IMR-90 (cell line): ENCODE measurements at regions of chr16 and their contacts with region 1.

Region 1: DNA sequence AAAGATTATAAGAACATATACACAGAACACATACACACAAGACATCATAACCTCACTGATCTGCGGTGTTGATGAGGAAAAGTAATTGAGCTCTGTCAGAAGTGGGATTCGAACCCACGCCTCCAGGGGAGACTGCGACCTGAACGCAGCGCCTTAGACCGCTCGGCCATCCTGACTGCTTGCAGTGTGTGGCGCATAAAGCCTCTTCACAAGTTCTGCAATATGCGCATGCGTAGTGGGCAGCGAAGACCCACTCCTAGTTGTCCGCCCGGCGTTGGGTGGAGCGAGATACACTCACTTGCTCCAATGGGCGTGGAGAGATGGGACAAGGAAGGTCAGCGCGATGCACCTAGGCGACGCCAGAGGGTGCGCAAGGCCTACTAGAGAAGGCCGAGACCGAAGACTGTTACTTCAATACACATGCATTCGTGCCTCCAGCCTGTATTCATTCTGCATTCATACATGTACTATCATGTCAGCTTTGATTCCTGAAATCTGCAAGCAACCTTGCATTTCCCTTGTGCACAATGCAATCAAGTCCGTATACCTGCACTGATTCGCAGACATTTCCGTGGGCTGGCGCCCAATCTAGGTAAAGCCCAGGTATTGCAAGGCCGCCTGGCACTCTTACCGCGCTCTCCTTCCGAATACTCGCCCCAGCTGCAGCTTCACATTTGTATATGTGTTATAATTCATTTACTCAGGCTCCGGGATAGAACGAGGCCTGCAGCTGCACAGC is 16.1 kb upstream of the PLLP start:
- DNase-seq: peak; percentile 97
- ATAC-seq: peak; percentile 89
- H3K4me3 ChIP-seq: peak overlapping the region; percentile 64; the same call in 1 of the 2 replicates
- H3K27ac ChIP-seq: no peak overlapping the region
- H3K4me1 ChIP-seq: peaks cover 3% of the 10 kb centered on the region; the same call in 1 of the 2 replicates
- H3K27me3 ChIP-seq: peaks cover 12% of the 10 kb centered on the region
- CTCF ChIP-seq: peak; percentile 99
- POLR2A ChIP-seq: peak; percentile 49; the same call in 1 of the 2 replicates
- RAD21 ChIP-seq: peak; percentile 100

Region 2: GRCh38 chr16:57084257-57084770 is 216.2 kb before region 1 on chr16:
- CTCF ChIA-PET with region 1: no interaction called
- POLR2A ChIA-PET with region 1: no interaction called
- dilution Hi-C with region 1: no loop called
- in situ Hi-C with region 1: loop called (anchors 10 kb)
- intact Hi-C with region 1: loop called (anchors 1 kb)
- DNase-seq: peak; percentile 68
- ATAC-seq: peak; percentile 96
- H3K4me3 ChIP-seq: no peak overlapping the region
- H3K27ac ChIP-seq: no peak overlapping the region
- H3K4me1 ChIP-seq: no peaks in the 10 kb centered on the region
- H3K27me3 ChIP-seq: peaks cover 9% of the 10 kb centered on the region; the same call in 1 of the 2 replicates
- CTCF ChIP-seq: peak; percentile 92
- POLR2A ChIP-seq: no peak
- RAD21 ChIP-seq: peak; percentile 91

Region 3: DNA sequence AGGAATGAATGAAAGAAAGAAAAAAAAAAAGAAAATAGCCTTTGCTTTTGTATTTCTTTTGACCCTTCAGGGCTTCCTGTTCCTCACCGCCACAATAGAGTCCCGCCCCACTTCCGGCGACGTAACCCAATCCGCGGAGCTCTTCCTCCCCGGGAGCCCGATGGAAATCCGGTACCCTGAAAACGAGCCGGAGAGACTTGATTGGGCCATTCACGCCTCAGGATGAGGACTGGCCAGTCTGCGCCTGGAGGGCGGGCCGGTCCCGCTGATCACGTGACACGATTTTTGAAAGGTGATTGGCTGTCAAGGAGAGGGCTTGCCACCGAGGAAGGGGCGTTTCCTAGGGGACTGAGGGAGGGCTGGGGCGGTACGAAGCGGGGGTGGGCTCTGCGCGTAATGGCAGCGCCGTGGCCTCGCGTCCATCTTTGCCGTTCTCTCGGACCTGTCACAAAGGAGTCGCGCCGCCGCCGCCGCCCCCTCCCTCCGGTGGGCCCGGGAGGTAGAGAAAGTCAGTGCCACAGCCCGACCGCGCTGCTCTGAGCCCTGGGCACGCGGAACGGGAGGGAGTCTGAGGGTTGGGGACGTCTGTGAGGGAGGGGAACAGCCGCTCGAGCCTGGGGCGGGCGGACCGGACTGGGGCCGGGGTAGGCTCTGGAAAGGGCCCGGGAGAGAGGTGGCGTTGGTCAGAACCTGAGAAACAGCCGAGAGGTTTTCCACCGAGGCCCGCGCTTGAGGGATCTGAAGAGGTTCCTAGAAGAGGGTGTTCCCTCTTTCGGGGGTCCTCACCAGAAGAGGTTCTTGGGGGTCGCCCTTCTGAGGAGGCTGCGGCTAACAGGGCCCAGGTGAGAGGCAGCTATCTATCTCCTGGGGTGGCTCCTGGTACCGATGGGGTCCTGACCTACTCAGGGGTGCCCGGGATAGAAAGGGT is 114.3 kb before region 1 on chr16 and contains the starts of genes PSME3IP1 and RSPRY1:
- CTCF ChIA-PET with region 1: interaction called, 3 read pairs
- POLR2A ChIA-PET with region 1: no interaction called
- dilution Hi-C with region 1: no loop called
- in situ Hi-C with region 1: no loop called
- intact Hi-C with region 1: loop called (anchors 2 kb)
- DNase-seq: peak; percentile 100
- ATAC-seq: peak; percentile 93
- H3K4me3 ChIP-seq: peak within 1 kb of the TSS; percentile 90
- H3K27ac ChIP-seq: peak within 1 kb of the TSS; percentile 94
- H3K4me1 ChIP-seq: peaks cover 8% of the 10 kb centered on the region; the same call in 1 of the 2 replicates
- H3K27me3 ChIP-seq: no peaks in the 10 kb centered on the region
- CTCF ChIP-seq: no peak
- POLR2A ChIP-seq: peak; percentile 83
- RAD21 ChIP-seq: no peak
- total RNA-seq, gene PSME3IP1: 50.2 and 52.2 TPM in 2 replicates
- total RNA-seq, gene RSPRY1: 59.2 and 62.2 TPM in 2 replicates

Region 4: GRCh38 chr16:57244767-57245471 is 55.6 kb before region 1 on chr16 and contains the start of gene ARL2BP:
- CTCF ChIA-PET with region 1: no interaction called
- POLR2A ChIA-PET with region 1: no interaction called
- dilution Hi-C with region 1: no loop called
- in situ Hi-C with region 1: no loop called
- intact Hi-C with region 1: loop called (anchors 2 kb)
- DNase-seq: peak; percentile 96
- ATAC-seq: peak; percentile 98
- H3K4me3 ChIP-seq: peak within 1 kb of the TSS; percentile 69
- H3K27ac ChIP-seq: peak within 1 kb of the TSS; percentile 66
- H3K4me1 ChIP-seq: no peaks in the 10 kb centered on the region; the same call in 1 of the 2 replicates
- H3K27me3 ChIP-seq: no peaks in the 10 kb centered on the region
- CTCF ChIP-seq: no peak; the same call in 1 of the 2 replicates
- POLR2A ChIP-seq: peak; percentile 72
- RAD21 ChIP-seq: no peak
- total RNA-seq, gene ARL2BP: 73.7 and 77.8 TPM in 2 replicates

Region 5: GRCh38 chr16:57413301-57413730 is 112.8 kb after region 1 on chr16:
- CTCF ChIA-PET with region 1: interaction called, 20 read pairs
- POLR2A ChIA-PET with region 1: interaction called, 4 read pairs
- dilution Hi-C with region 1: no loop called
- in situ Hi-C with region 1: loop called (anchors 5 kb)
- intact Hi-C with region 1: loop called (anchors 1 kb)
- DNase-seq: no peak
- ATAC-seq: no peak
- H3K4me3 ChIP-seq: no peak overlapping the region
- H3K27ac ChIP-seq: no peak overlapping the region
- H3K4me1 ChIP-seq: peaks cover 1% of the 10 kb centered on the region; the same call in 1 of the 2 replicates
- H3K27me3 ChIP-seq: peaks cover 45% of the 10 kb centered on the region
- CTCF ChIP-seq: no peak
- POLR2A ChIP-seq: no peak
- RAD21 ChIP-seq: no peak

Region 6: GRCh38 chr16:57519796-57520360 is 219.3 kb after region 1 on chr16:
- CTCF ChIA-PET with region 1: interaction called, 3 read pairs
- POLR2A ChIA-PET with region 1: no interaction called
- dilution Hi-C with region 1: no loop called
- in situ Hi-C with region 1: loop called (anchors 5 kb)
- intact Hi-C with region 1: no loop called
- DNase-seq: peak; percentile 52
- ATAC-seq: peak; percentile 96
- H3K4me3 ChIP-seq: no peak overlapping the region
- H3K27ac ChIP-seq: no peak overlapping the region
- H3K4me1 ChIP-seq: no peaks in the 10 kb centered on the region; the same call in 1 of the 2 replicates
- H3K27me3 ChIP-seq: no peaks in the 10 kb centered on the region
- CTCF ChIP-seq: peak; percentile 90
- POLR2A ChIP-seq: no peak
- RAD21 ChIP-seq: peak; percentile 88